ENCODE measurements at regions of chr11 and their contacts with region 1.

Region 1: GRCh38 chr11:100930185-100930778 is 199.3 kb downstream of the PGR start:
- DNase-seq: no peak
- H3K4me3 ChIP-seq: no peak overlapping the region
- H3K27me3 ChIP-seq: no peaks in the 10 kb centered on the region
- CTCF ChIP-seq: peak; percentile 49

Region 2: DNA sequence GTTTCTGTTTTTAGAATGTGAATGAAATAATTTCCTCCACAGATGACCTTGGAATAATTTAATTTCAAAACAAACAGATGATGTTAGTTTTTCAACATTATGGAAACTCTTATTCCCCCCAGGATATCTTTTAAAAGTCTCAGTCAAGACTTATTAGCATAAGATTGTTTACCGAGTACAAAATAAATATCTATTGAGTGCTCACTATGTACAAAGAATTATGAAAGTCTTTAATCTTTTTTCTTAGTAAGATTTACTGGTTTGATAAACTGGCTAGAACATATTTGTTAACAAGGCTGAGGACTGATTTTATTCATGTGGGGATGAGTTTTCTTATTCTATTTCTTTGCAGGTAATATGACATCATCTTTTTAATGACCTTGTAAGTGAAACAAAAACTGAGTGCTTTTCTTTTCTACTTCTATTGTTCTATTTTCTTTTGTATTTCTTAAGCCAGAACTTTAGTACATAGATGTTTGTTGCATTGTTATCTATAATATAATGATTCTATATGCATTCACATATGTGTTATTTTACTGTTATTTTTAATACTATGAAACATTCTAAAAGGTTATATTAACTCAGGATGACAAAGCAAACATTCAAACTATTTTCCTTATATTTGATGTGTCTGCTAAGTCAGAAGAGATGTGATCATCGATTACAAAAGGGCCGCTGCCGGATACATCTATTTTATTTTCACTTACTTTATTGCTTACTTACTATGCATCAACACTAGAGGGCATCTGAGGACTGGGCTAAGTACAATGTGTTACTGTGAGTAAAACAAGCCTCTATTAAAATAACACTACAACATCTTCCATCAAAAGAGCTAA is 354.2 kb before region 1 on chr11:
- CTCF ChIA-PET with region 1: interaction called, 17 read pairs
- POLR2A ChIA-PET with region 1: no interaction called
- DNase-seq: no peak
- H3K4me3 ChIP-seq: no peak overlapping the region
- H3K27me3 ChIP-seq: no peaks in the 10 kb centered on the region
- CTCF ChIP-seq: peak; percentile 80

Region 3: GRCh38 chr11:100888836-100889235 is 41.4 kb before region 1 on chr11:
- CTCF ChIA-PET with region 1: no interaction called
- POLR2A ChIA-PET with region 1: no interaction called
- DNase-seq: no peak
- H3K4me3 ChIP-seq: no peak overlapping the region
- H3K27me3 ChIP-seq: no peaks in the 10 kb centered on the region
- CTCF ChIP-seq: no peak